Activated naive CD4-positive, alpha-beta T cell treated with anti-CD3 and anti-CD28 coated beads, Interleukin-2, amount 10 ng/mL, durations not matched to agents 7 days and 5 days (primary cell): ENCODE measurements at regions of chr11 and their contacts with region 1.

Region 1: DNA sequence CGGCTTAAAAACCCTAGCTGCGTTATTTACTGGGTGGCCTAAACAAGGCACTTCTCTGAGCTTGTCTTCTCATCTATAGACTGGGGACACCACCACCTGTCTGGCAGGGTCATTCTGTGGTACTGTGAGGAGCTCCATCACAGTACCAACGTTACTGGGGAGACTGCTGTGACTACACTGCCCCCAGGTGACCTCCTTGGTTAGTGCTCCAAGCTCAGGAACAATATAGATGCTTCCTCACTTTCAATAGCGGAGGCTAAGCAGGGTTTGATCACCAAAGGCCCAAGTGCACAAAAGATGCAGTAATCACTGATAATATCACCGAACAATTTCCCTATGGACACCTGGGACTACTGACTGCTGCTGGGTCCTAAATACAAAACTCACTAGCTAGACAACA is 18.8 kb downstream of the PRPF19 start:
- DNase-seq: peak; percentile 71
- H3K4me3 Mint-ChIP-seq: no peak overlapping the region
- H3K27ac Mint-ChIP-seq: no peak overlapping the region
- H3K4me1 Mint-ChIP-seq: peaks cover 3% of the 10 kb centered on the region
- H3K27me3 Mint-ChIP-seq: no peaks in the 10 kb centered on the region

Region 2: GRCh38 chr11:60775420-60775961 is 112.1 kb before region 1 on chr11:
- CTCF ChIA-PET with region 1: interaction called, 22 read pairs
- DNase-seq: peak; percentile 90
- H3K4me3 Mint-ChIP-seq: no peak overlapping the region
- H3K27ac Mint-ChIP-seq: peak overlapping the region; percentile 58
- H3K4me1 Mint-ChIP-seq: peaks cover 7% of the 10 kb centered on the region
- H3K27me3 Mint-ChIP-seq: peaks cover 33% of the 10 kb centered on the region

Region 3: GRCh38 chr11:60841797-60842667 is 45.5 kb before region 1 on chr11 and contains the start of gene CCDC86:
- CTCF ChIA-PET with region 1: interaction called, 15 read pairs
- DNase-seq: peak; percentile 98
- H3K4me3 Mint-ChIP-seq: peak within 1 kb of the TSS; percentile 87
- H3K27ac Mint-ChIP-seq: peak within 1 kb of the TSS; percentile 90
- H3K4me1 Mint-ChIP-seq: peaks cover 47% of the 10 kb centered on the region
- H3K27me3 Mint-ChIP-seq: peaks cover 9% of the 10 kb centered on the region

Region 4: DNA sequence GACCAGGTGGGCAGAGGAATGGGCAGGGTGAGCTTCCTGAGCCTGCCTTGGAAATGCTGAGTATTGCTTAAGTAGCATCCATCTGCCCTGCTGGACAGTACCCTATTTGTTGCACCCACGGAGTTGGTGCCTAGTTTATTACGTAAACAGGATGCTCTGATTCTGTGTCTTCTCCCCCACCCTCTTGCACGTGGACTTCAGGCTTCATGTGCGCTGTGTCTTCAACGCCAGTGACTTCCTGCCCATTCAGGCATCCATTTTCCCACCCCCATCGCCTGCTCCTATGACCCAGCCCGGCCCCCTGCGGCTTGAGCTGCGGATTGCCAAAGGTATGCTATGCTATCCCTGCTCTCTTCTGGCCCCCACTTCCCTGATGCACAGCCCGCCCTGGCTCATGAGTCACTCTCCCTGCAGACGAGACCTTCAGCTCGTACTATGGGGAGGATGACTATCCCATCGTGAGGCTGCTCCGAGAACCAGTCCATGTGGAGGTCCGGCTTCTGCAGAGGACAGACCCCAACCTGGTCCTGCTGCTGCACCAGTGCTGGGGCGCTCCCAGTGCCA is 14.5 kb before region 1 on chr11:
- CTCF ChIA-PET with region 1: interaction called, 16 read pairs
- DNase-seq: peak; percentile 37
- H3K4me3 Mint-ChIP-seq: no peak overlapping the region
- H3K27ac Mint-ChIP-seq: no peak overlapping the region
- H3K4me1 Mint-ChIP-seq: peaks cover 45% of the 10 kb centered on the region
- H3K27me3 Mint-ChIP-seq: peaks cover 13% of the 10 kb centered on the region

Region 5: GRCh38 chr11:60899046-60899936 is 11.7 kb after region 1 on chr11:
- CTCF ChIA-PET with region 1: interaction called, 35 read pairs
- DNase-seq: peak; percentile 45
- H3K4me3 Mint-ChIP-seq: no peak overlapping the region
- H3K27ac Mint-ChIP-seq: peak overlapping the region; percentile 15
- H3K4me1 Mint-ChIP-seq: peaks cover 7% of the 10 kb centered on the region
- H3K27me3 Mint-ChIP-seq: no peaks in the 10 kb centered on the region

Region 6: DNA sequence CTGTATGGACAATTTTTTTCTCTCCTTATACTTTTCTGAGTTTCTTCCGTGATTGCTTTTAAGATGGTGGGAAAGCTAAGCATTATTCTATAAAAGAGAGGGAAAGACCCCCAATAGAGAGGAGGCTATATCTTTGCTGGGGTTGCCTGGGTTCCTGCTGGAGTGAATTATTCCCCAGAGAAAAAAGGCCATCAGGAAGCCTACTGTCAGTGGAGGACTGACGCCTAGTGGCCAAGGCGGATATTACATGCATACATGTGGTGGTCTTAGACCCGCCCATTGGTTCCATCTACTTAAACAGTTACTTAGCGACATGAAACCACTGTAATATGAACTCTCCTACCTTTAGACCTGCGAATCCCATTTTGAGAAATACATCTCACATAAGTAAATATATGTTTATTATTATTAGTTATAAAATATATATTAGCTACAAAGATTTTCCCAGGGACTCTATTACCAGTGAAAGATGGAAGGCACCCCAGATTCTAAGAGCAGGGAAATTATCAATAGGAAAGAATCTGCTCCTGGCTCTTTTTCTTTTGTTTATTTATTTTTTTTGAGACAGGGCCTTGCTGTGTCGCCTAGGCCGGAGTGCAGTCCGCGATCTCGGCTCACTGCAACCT is 300.1 kb after region 1 on chr11:
- CTCF ChIA-PET with region 1: interaction called, 10 read pairs
- DNase-seq: peak; percentile 86
- H3K4me3 Mint-ChIP-seq: no peak overlapping the region
- H3K27ac Mint-ChIP-seq: no peak overlapping the region
- H3K4me1 Mint-ChIP-seq: peaks cover 2% of the 10 kb centered on the region
- H3K27me3 Mint-ChIP-seq: peaks cover 7% of the 10 kb centered on the region